IMR-90 (cell line): ENCODE measurements at regions of chr5 and their contacts with region 1.

Region 1: GRCh38 chr5:160199410-160199911 is 29.8 kb upstream of the FABP6 start:
- DNase-seq: peak; percentile 23
- ATAC-seq: peak; percentile 98
- H3K4me3 ChIP-seq: no peak overlapping the region
- H3K27ac ChIP-seq: peak overlapping the region; percentile 30; the same call in 1 of the 2 replicates
- H3K4me1 ChIP-seq: peaks cover 12% of the 10 kb centered on the region
- H3K27me3 ChIP-seq: no peaks in the 10 kb centered on the region
- CTCF ChIP-seq: peak; percentile 84
- POLR2A ChIP-seq: 0 out of 2 replicates have a peak, but pooled peaks have one; percentile 20
- RAD21 ChIP-seq: peak; percentile 85

Region 2: DNA sequence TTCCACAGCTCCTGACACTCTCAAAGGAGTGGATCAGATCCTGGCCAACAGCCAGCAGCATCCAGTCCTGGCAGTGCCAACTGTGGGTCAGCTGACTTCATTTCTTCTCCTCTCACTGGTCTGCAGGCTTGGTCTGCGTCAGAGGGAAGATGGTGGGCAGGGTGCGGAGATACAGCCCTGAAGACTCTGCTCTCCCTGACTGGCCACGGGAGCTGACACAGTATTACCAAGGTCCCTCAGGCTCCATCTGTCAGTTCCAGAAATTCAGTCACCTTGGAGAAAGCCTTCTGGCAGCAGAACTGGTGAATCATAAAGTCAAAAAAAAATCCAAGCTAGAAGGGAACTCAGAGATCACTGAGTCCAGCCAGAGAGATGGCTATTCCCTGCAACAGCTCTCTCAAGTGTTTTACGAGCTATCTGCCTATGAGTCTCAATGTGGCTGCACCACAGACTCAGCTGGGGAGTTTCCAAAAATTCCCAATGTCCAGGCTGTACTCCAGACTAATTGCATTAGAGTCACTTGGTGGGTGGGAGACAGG is 143.0 kb after region 1 on chr5:
- CTCF ChIA-PET with region 1: interaction called, 9 read pairs
- POLR2A ChIA-PET with region 1: no interaction called
- dilution Hi-C with region 1: no loop called
- in situ Hi-C with region 1: loop called (anchors 5 kb)
- intact Hi-C with region 1: loop called (anchors 1 kb)
- DNase-seq: peak; percentile 61
- ATAC-seq: no peak
- H3K4me3 ChIP-seq: no peak overlapping the region
- H3K27ac ChIP-seq: no peak overlapping the region
- H3K4me1 ChIP-seq: peaks cover 2% of the 10 kb centered on the region; the same call in 1 of the 2 replicates
- H3K27me3 ChIP-seq: no peaks in the 10 kb centered on the region
- CTCF ChIP-seq: no peak
- POLR2A ChIP-seq: no peak
- RAD21 ChIP-seq: no peak

Region 3: DNA sequence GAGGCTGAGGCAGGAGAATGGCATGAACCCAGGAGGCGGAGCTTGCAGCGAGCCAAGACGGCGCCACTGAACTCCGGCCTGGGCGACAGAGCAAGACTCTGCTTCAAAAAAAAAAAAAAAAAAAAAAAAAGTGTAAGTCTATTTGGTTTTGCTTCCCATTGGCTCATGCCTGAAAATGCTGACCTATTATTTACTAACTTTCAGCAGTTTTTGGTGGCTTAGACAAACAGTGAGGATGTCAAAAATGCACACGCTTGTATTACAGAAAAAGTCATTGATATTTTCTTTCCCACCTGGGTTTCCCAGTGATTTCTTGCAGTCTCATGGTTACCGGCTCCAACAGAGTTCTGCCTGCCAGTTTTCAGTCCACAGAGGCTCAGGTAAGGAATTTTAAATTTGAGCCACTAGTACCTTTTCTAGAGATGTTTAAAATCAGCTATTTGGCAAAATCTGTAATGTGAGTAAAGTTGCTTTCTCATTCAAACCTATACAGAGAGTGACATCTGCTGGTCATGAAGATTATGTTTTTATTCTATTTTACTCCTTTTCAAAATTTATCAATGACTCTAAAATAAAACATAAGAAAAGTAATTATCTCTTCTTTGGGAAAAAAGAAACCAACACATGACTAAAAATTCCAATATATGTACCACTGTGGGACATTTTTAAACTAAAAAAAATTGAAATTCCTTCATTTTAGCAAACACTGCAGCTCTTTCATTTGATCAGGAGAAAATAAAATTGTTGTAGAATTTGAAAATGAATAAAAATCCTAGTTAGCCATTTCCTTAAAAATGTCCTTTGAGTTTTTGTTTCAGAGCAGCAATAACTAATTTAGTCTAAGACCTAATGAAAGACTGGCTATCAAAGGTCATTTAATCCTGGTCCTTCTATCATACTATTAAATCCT is 191.6 kb after region 1 on chr5:
- CTCF ChIA-PET with region 1: interaction called, 3 read pairs
- POLR2A ChIA-PET with region 1: interaction called, 23 read pairs
- dilution Hi-C with region 1: no loop called
- in situ Hi-C with region 1: no loop called
- intact Hi-C with region 1: loop called (anchors 1 kb)
- DNase-seq: peak; percentile 36
- ATAC-seq: no peak; the same call in 1 of the 2 replicates
- H3K4me3 ChIP-seq: no peak overlapping the region
- H3K27ac ChIP-seq: no peak overlapping the region
- H3K4me1 ChIP-seq: no peaks in the 10 kb centered on the region
- H3K27me3 ChIP-seq: no peaks in the 10 kb centered on the region
- CTCF ChIP-seq: peak; percentile 59
- POLR2A ChIP-seq: no peak
- RAD21 ChIP-seq: peak; percentile 69